Activated CD4-positive, alpha-beta memory T cell treated with anti-CD3 and anti-CD28 coated beads, Interleukin-2, amount 10 ng/mL, durations not matched to agents 7 days and 5 days (primary cell): ENCODE measurements at regions of chr10 and their contacts with region 1.

Region 1: GRCh38 chr10:102384053-102384452 is 11.5 kb upstream of the NFKB2 start:
- DNase-seq: no peak
- H3K4me3 Mint-ChIP-seq: no peak overlapping the region
- H3K27ac Mint-ChIP-seq: no peak overlapping the region
- H3K4me1 Mint-ChIP-seq: no peaks in the 10 kb centered on the region
- H3K27me3 Mint-ChIP-seq: no peaks in the 10 kb centered on the region

Region 2: GRCh38 chr10:102368072-102368471 is 16.0 kb before region 1 on chr10:
- CTCF ChIA-PET with region 1: interaction called, 10 read pairs
- POLR2A ChIA-PET with region 1: no interaction called
- DNase-seq: no peak
- H3K4me3 Mint-ChIP-seq: no peak overlapping the region
- H3K27ac Mint-ChIP-seq: no peak overlapping the region
- H3K4me1 Mint-ChIP-seq: no peaks in the 10 kb centered on the region
- H3K27me3 Mint-ChIP-seq: no peaks in the 10 kb centered on the region

Region 3: DNA sequence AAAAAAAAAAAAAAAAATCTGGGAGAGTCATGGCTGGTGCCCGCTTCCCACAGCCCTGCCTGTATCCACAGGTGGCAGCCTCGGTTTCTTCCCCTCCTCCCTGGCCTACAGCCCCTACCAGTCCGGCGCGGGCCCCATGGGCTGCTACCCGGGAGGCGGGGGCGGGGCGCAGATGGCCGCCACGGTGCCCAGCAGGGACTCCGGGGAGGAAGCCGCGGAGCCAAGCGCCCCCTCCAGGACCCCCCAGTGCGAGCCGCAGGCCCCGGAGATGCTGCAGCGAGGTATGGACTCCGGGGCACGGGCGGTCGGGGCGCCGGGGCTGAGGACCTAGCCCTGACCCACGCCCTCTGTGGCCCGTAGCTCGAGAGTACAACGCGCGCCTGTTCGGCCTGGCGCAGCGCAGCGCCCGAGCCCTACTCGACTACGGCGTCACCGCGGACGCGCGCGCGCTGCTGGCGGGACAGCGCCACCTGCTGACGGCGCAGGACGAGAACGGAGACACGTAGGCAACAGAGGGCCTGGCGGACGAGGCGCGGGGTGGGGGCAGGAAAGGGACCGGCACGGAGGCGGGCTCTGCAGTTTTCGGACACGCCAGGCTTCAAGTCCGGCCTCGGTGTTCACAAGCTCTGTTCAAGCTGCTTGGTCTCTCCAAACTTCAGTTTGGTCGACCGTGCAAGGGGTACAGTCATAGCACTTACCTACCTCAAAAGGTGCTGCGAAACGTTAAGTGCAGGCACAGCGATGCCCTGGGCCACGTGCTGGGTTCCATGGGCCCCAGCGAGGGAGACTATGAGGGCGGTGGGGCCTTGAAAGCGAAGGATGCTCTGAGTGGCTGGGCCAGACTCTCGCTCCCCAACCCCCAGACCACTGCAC is 15.4 kb after region 1 on chr10:
- CTCF ChIA-PET with region 1: interaction called, 22 read pairs
- POLR2A ChIA-PET with region 1: interaction called, 10 read pairs
- DNase-seq: peak; percentile 91
- H3K4me3 Mint-ChIP-seq: peak overlapping the region; percentile 66
- H3K27ac Mint-ChIP-seq: peak overlapping the region; percentile 63
- H3K4me1 Mint-ChIP-seq: peaks cover 45% of the 10 kb centered on the region
- H3K27me3 Mint-ChIP-seq: no peaks in the 10 kb centered on the region

Region 4: GRCh38 chr10:102420810-102421644 is 37.0 kb after region 1 on chr10 and contains the start of gene FBXL15:
- CTCF ChIA-PET with region 1: no interaction called
- POLR2A ChIA-PET with region 1: no interaction called
- DNase-seq: peak; percentile 97
- H3K4me3 Mint-ChIP-seq: peak within 1 kb of the TSS; percentile 87
- H3K27ac Mint-ChIP-seq: peak within 1 kb of the TSS; percentile 90
- H3K4me1 Mint-ChIP-seq: peaks cover 40% of the 10 kb centered on the region
- H3K27me3 Mint-ChIP-seq: peaks cover 18% of the 10 kb centered on the region
- total RNA-seq, gene FBXL15: 13.5 to 14.3 TPM